ENCODE measurements at regions of chr16 and their contacts with region 1.

Region 1: DNA sequence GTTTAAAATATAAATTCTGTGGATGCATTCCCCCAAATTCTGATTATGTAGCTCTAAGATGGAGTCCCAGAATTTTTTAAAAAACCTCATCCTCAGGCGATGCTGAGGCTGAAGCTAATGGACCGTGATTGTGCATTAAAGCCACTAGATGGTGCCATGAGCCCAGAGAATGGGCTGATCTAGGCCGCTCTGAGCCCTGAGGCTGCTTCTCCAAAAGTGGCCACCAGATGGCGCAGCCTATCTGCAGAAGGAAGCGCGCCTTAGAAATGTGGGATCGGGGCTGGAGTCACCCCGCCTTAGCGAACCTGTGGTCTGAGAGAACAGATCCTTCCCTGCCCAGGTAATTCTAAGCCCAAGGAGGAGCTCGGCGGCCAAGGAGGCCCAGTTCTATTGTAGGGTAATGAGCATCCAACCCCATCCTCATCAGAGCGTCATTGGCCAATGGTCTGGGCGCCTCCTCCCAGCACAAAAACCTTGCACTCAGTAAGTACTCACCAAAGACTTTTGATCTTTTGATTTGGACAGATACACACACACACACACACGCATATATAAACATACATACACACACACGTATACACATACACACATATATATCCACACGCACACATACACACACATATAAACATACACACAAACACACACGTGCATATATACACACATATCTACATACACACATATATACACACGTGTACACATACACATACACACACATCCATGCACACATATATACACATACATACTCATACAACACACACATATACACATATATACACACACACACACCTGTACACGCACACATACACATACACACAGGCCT is 13.7 kb upstream of the MMP2 start:
- DNase-seq: peak; percentile 78
- H3K27ac ChIP-seq: no peak overlapping the region
- CTCF ChIP-seq: peak; percentile 97

Region 2: GRCh38 chr16:55454861-55455260 is 10.4 kb before region 1 on chr16:
- CTCF ChIA-PET with region 1: interaction called, 11 read pairs
- POLR2A ChIA-PET with region 1: no interaction called
- DNase-seq: no peak
- H3K27ac ChIP-seq: no peak overlapping the region
- CTCF ChIP-seq: no peak

Region 3: GRCh38 chr16:55543472-55543871 is 78.2 kb after region 1 on chr16:
- CTCF ChIA-PET with region 1: interaction called, 26 read pairs
- POLR2A ChIA-PET with region 1: no interaction called
- DNase-seq: no peak
- H3K27ac ChIP-seq: no peak overlapping the region
- CTCF ChIP-seq: peak; percentile 33

Region 4: DNA sequence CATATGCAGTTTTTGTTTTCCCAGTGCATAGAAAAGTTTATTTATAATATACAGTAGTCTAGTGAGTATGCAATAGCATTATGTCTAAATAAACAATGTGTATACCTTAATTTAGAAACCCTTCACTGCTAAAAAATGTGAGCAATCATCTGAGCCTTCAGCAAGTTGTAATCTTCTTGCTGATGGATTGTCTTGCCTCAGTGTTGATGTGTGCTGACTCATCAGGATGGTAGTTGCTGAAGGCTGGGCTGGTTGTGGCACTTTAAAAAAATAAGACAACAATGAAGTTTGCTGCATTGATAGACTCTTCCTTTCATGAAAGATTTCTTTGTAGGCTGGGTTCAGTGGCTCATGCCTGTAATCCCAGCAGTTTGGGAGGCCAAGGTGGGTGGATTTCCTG is 87.3 kb after region 1 on chr16:
- CTCF ChIA-PET with region 1: interaction called, 10 read pairs
- POLR2A ChIA-PET with region 1: no interaction called
- DNase-seq: peak; percentile 44
- H3K27ac ChIP-seq: peak overlapping the region; percentile 75
- CTCF ChIP-seq: no peak

Region 5: DNA sequence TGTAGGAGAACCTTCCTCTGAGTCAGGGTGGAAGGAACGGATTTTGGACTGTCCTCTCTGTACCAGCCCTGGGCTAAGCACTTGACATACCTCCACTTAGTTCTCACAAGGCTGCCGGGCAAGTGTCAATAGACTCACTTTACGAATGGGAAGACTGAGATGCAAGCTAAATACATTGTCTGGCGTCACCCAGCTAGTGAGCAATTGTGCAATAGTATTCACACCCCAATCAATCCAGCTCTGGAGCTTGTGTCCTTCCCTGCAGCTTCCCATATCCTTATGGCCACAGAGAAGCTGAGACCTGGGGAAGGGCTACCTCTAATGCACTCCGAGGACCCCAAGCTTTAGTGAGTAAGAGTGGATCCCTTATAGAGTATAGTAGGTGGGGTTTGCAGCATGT is 230.3 kb after region 1 on chr16:
- CTCF ChIA-PET with region 1: interaction called, 10 read pairs
- POLR2A ChIA-PET with region 1: no interaction called
- DNase-seq: no peak
- H3K27ac ChIP-seq: no peak overlapping the region
- CTCF ChIP-seq: no peak

Region 6: DNA sequence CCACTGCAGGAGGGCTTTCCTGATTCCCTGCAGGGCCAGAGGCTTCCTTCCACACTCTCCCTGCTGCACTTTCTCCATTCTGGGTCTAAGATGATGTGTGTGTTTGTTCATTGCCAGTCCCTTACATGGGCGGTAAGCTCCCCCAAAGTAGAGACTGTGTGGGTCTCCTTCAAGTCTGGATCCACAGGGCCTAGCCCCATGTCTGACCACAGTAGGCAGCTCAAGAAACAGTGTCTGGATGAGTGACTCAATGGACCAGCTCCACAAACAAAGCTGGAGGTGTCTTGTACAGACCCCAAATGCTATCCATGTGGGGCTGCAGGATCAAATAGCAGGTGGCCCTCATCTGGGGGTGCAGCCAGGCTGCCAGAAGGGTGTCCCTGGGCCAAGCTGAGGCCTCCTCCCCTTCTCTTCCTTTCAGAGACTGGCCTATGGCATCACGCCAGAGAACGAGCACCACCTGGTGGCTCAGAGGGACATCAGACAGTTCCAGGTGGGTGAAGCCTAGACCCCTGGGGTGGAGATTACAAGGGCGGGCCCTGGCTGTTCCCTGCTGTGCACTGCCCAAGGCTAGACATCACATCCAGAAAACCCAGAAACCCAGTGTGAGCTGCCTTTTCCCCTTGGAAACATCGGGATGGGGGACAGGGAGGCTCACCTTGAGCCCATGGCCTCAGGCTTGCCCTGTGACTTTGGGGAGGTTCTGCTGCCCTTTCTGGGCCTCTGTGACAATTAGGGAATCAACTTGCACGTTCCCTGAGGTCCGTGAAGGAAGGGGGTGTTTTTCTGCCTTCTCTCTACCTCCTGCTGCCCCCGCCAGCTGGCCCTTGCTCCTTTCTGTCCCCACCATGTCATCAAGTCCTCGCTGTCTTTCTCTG is 236.4 kb after region 1 on chr16:
- CTCF ChIA-PET with region 1: interaction called, 29 read pairs
- POLR2A ChIA-PET with region 1: no interaction called
- DNase-seq: peak; percentile 43
- H3K27ac ChIP-seq: no peak overlapping the region
- CTCF ChIP-seq: peak; percentile 53